T-cell (primary cell): ENCODE measurements at regions of chr1 and their contacts with region 1.

Region 1: DNA sequence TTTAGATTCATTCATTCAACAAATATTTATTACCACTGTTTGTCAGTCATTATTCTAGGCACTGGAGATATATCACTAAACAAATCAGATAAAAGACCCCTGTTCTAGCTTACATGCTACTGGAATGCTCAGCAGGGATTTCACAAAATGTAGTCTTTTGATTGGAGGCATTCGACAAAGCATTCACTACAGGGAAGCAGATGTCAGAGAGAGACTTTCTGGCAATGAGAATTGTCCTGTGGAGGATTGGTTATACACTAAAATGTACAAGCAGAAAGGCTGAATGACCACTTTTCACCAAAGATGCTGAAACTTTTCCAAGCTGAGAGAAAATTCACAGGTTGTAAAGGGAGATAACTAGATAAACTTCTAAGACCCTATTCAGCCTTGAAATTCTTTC is 57.7 kb downstream of the SCMH1 start:
- DNase-seq: no peak
- ATAC-seq: no peak
- H3K4me3 ChIP-seq: no peak overlapping the region
- H3K4me3 Mint-ChIP-seq: no peak overlapping the region
- H3K27ac ChIP-seq: no peak overlapping the region
- H3K27ac Mint-ChIP-seq: no peak overlapping the region
- H3K4me1 ChIP-seq: no peaks in the 10 kb centered on the region
- H3K4me1 Mint-ChIP-seq: peaks cover under 1 to 3% (median 2%) of the 10 kb centered on the region in 3 donors
- H3K27me3 ChIP-seq: no peaks in the 10 kb centered on the region
- H3K27me3 Mint-ChIP-seq: no peaks in the 10 kb centered on the region

Region 2: DNA sequence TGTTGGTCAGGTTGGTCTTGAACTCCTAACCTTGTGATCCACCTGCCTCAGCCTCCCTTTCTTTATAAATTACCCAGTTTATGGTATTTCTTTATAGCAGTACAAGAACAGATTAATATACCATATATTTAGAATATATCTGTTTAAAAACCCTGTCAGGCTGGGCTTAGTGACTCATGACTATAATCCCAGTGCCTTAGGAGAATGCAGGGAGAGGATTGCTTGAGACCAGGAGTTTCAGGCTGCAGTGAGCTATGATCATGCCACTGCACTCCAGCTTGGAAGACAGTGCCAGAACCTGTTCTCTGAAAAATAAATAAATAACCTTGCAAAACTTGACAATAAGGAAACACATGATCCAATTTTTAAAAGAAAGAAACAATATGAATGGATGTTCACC is 609.1 kb before region 1 on chr1:
- CTCF ChIA-PET with region 1: interaction called in 1 of 2 experiments, 10 read pairs
- POLR2A ChIA-PET with region 1: no interaction called
- DNase-seq: no peak
- ATAC-seq: no peak
- H3K4me3 ChIP-seq: no peak overlapping the region
- H3K4me3 Mint-ChIP-seq: no peak overlapping the region
- H3K27ac ChIP-seq: no peak overlapping the region
- H3K27ac Mint-ChIP-seq: no peak overlapping the region
- H3K4me1 ChIP-seq: no peaks in the 10 kb centered on the region
- H3K4me1 Mint-ChIP-seq: no peaks in the 10 kb centered on the region
- H3K27me3 ChIP-seq: peaks cover 0 to 2% of the 10 kb centered on the region in 2 experiments
- H3K27me3 Mint-ChIP-seq: peaks cover 9 to 18% of the 10 kb centered on the region in 2 donors

Region 3: DNA sequence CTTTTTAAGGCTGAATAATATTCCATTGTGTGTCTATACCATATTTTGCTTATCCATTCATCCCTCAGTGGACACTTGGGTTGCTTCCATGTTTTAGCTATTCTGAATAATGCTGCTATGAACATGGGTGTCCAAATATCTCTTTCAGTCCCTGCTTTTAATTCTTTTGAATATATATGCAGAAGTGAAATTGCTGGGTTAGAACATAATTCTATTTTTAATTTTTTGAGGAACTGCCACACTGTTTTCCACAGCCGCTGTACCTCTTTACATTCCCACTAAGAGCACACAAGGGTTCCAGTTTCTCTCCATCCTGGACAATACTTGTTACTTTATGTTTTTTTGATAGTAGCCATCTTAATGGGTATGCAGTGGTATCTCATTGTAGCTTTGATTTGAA is 584.5 kb before region 1 on chr1:
- CTCF ChIA-PET with region 1: no interaction called
- POLR2A ChIA-PET with region 1: no interaction called
- DNase-seq: no peak
- ATAC-seq: no peak
- H3K4me3 ChIP-seq: no peak overlapping the region
- H3K4me3 Mint-ChIP-seq: no peak overlapping the region
- H3K27ac ChIP-seq: no peak overlapping the region
- H3K27ac Mint-ChIP-seq: no peak overlapping the region
- H3K4me1 ChIP-seq: no peaks in the 10 kb centered on the region
- H3K4me1 Mint-ChIP-seq: no peaks in the 10 kb centered on the region
- H3K27me3 ChIP-seq: peaks cover 0 to 18% of the 10 kb centered on the region in 2 experiments
- H3K27me3 Mint-ChIP-seq: peaks cover 4 to 6% of the 10 kb centered on the region in 2 donors

Region 4: DNA sequence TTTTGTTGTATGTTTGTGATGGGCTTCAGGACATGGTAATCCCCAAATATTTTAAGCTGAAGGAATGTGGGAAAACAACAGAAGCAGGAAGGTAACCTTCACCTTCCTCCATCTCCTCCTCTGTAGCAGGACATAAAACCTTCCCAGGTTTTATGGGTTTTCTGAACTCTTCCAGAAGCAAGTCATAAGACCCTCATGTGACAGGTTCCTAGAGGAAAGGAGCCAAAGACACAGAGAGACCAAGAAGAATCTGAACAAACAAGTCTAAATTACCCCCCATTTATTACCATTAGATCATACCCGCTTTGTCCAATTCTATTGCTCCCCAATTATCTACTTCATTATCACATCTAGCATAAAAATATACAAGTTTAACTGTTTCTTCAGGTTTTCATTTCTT is 28.9 kb after region 1 on chr1:
- CTCF ChIA-PET with region 1: no interaction called
- POLR2A ChIA-PET with region 1: no interaction called
- DNase-seq: no peak
- ATAC-seq: no peak
- H3K4me3 ChIP-seq: no peak overlapping the region
- H3K4me3 Mint-ChIP-seq: no peak overlapping the region
- H3K27ac ChIP-seq: no peak overlapping the region
- H3K27ac Mint-ChIP-seq: no peak overlapping the region
- H3K4me1 ChIP-seq: no peaks in the 10 kb centered on the region
- H3K4me1 Mint-ChIP-seq: peaks cover 31 to 37% (median 34%) of the 10 kb centered on the region in 3 donors
- H3K27me3 ChIP-seq: no peaks in the 10 kb centered on the region
- H3K27me3 Mint-ChIP-seq: no peaks in the 10 kb centered on the region

Region 5: DNA sequence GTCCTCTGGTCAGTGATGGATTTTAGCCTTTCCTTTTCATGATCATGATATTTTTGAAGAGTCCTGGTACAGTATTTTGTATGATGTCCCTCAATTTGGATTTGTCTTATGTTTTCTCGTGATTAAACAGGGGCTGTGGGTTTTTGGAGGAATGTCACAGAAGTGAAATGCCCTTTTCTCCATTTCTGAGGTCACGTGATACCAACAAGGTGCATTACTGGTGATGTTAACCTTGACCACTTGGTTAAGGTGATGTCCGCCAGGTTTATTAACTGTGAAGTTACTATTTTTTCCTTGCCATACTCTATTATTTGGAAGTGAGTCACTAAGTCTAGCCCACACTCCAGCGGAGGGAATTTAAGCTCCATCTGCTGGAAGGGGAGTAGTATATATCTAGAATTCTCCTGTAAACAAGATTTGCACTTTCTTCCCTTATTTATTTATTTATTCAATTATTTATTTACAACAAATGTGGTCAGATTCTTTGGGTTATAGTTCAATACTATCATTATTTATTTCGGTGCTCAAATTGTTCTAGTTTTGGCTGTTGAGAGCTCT is 610.8 kb after region 1 on chr1:
- CTCF ChIA-PET with region 1: no interaction called
- POLR2A ChIA-PET with region 1: no interaction called
- DNase-seq: no peak
- ATAC-seq: no peak
- H3K4me3 ChIP-seq: no peak overlapping the region
- H3K4me3 Mint-ChIP-seq: no peak overlapping the region
- H3K27ac ChIP-seq: no peak overlapping the region
- H3K27ac Mint-ChIP-seq: no peak overlapping the region
- H3K4me1 ChIP-seq: peaks cover 17 to 40% of the 10 kb centered on the region in 2 experiments
- H3K4me1 Mint-ChIP-seq: peaks cover 36 to 46% (median 45%) of the 10 kb centered on the region in 3 donors
- H3K27me3 ChIP-seq: no peaks in the 10 kb centered on the region
- H3K27me3 Mint-ChIP-seq: peaks cover 0 to 1% of the 10 kb centered on the region in 2 donors